ENCODE measurements at regions of chr10 and their contacts with region 1.

Region 1: GRCh38 chr10:63268798-63269503 is 135.8 kb downstream of the NRBF2 start:
- DNase-seq: peak; percentile 52
- ATAC-seq: peak; percentile 89
- H3K4me3 Mint-ChIP-seq: peak overlapping the region; percentile 99
- H3K27ac Mint-ChIP-seq: peak overlapping the region; percentile 98
- H3K4me1 Mint-ChIP-seq: peaks cover 35% of the 10 kb centered on the region
- H3K27me3 Mint-ChIP-seq: no peaks in the 10 kb centered on the region
- CTCF ChIP-seq: no peak

Region 2: DNA sequence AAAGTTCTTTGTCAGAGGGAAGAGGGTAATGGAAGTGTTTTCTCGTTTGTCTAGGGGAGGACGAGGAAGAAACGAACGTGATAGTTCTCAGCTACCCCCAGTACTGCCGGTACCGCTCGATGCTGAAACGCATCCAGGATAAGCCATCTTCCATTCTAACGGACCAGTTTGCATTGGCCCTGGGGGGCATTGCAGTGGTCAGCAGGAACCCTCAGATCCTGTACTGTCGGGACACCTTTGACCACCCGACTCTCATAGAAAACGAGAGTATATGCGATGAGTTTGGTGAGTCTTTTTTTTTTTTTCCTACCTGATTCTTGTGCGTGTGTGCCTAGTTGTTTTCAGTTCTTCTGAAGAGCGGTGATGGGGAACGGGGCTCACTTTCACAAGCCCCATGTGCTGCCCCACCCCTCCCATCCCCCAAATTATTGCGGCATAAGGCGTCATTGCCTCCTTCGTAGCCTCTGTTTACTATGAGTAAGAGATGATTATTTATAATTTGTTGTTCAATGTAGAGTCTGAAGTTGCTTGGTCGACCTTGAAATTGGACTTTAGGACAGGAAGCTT is 1268.8 kb before region 1 on chr10:
- CTCF ChIA-PET with region 1: no interaction called
- POLR2A ChIA-PET with region 1: no interaction called
- intact Hi-C with region 1: loop called (anchors 5 kb)
- DNase-seq: peak; percentile 60
- ATAC-seq: peak; percentile 86
- H3K4me3 Mint-ChIP-seq: peak overlapping the region; percentile 77
- H3K27ac Mint-ChIP-seq: peak overlapping the region; percentile 100
- H3K4me1 Mint-ChIP-seq: peaks cover 95% of the 10 kb centered on the region
- H3K27me3 Mint-ChIP-seq: no peaks in the 10 kb centered on the region
- CTCF ChIP-seq: no peak

Region 3: DNA sequence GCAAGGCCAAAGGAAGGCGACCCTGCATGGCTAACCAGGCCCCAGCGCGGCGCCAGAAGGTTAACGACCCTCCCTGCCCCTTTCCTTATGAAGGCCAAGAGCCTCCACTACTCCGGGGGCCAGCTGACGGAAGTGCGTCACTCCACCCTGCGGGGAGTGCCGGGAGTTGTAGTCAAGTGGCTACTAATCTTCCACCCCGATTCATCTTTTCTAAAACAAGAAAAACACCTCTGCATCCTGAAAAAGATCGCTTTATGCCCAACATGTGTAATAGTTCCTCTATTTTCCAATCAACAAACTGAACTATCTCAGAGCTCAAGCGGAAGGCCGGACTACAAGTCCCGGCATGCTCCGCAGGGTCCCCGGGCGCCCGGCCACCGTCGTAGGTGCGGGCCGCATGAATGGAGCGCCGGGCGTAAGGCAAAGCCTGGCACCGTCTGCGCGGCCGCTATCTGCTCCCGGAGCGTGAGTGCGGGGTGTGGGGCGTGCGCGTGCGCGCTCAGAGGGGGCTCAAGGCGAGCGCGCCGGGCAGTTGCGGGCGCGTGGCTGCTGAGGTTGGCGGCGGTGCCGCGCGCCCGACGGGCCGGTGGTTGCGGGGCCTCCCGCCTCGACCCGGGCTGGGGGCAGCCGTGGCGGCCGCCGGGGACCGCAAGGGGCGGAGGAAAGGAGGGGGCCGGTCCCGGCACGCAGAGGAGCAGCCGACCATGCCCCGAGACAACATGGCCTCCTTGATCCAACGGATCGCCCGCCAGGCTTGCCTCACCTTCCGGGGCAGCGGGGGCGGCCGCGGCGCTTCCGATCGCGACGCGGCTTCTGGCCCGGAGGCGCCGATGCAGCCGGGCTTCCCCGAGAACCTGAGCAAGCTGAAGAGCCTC is 464.4 kb before region 1 on chr10 and contains the start of gene ADO:
- CTCF ChIA-PET with region 1: no interaction called
- POLR2A ChIA-PET with region 1: no interaction called
- intact Hi-C with region 1: loop called (anchors 5 kb)
- DNase-seq: peak; percentile 77
- ATAC-seq: peak; percentile 87
- H3K4me3 Mint-ChIP-seq: peak within 1 kb of the TSS; percentile 95
- H3K27ac Mint-ChIP-seq: peak within 1 kb of the TSS; percentile 99
- H3K4me1 Mint-ChIP-seq: peaks cover 41% of the 10 kb centered on the region
- H3K27me3 Mint-ChIP-seq: no peaks in the 10 kb centered on the region
- CTCF ChIP-seq: no peak
- total RNA-seq, gene ADO: 21.6 and 21.7 TPM in 2 replicates

Region 4: DNA sequence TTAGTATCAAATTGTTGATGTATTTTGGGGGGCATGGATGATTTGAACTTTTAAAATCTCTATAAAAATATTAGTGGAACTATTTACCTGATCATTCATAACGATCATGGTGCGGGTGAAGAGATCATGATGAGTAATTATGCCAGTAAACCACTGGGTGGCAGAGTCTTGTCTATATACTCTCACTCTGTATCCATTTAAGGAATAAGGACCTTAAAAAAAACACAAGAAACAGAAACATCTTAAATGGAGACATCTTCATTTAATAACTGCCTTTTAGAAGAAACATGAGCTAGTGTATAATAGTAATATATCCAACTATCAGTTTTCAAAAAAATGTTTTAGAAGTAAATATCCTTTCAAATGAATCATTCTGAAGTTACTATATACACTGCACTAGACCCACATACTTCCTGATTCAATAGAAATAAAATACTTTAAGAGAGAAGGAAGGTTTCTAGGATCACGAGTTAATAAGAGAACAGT is 51.8 kb before region 1 on chr10:
- CTCF ChIA-PET with region 1: interaction called, 7 read pairs
- POLR2A ChIA-PET with region 1: interaction called, 20 read pairs
- intact Hi-C with region 1: loop called (anchors 1 kb)
- DNase-seq: no peak
- ATAC-seq: peak; percentile 89
- H3K4me3 Mint-ChIP-seq: no peak overlapping the region
- H3K27ac Mint-ChIP-seq: peak overlapping the region; percentile 41
- H3K4me1 Mint-ChIP-seq: peaks cover 60% of the 10 kb centered on the region
- H3K27me3 Mint-ChIP-seq: no peaks in the 10 kb centered on the region
- CTCF ChIP-seq: no peak

Region 5: GRCh38 chr10:63241841-63242281 is 27.1 kb before region 1 on chr10:
- CTCF ChIA-PET with region 1: interaction called, 6 read pairs
- POLR2A ChIA-PET with region 1: interaction called, 28 read pairs
- intact Hi-C with region 1: no loop called
- DNase-seq: no peak
- ATAC-seq: peak; percentile 23
- H3K4me3 Mint-ChIP-seq: peak overlapping the region; percentile 29
- H3K27ac Mint-ChIP-seq: peak overlapping the region; percentile 74
- H3K4me1 Mint-ChIP-seq: peaks cover 87% of the 10 kb centered on the region
- H3K27me3 Mint-ChIP-seq: no peaks in the 10 kb centered on the region
- CTCF ChIP-seq: no peak

Region 6: GRCh38 chr10:63337455-63338251 is 68.7 kb after region 1 on chr10:
- CTCF ChIA-PET with region 1: no interaction called
- POLR2A ChIA-PET with region 1: no interaction called
- intact Hi-C with region 1: no loop called
- DNase-seq: no peak
- ATAC-seq: no peak
- H3K4me3 Mint-ChIP-seq: no peak overlapping the region
- H3K27ac Mint-ChIP-seq: no peak overlapping the region
- H3K4me1 Mint-ChIP-seq: no peaks in the 10 kb centered on the region
- H3K27me3 Mint-ChIP-seq: no peaks in the 10 kb centered on the region
- CTCF ChIP-seq: no peak

Region 7: GRCh38 chr10:63421591-63421990 is 152.6 kb after region 1 on chr10:
- CTCF ChIA-PET with region 1: no interaction called
- POLR2A ChIA-PET with region 1: interaction called, 6 read pairs
- intact Hi-C with region 1: loop called (anchors 1 kb)
- DNase-seq: no peak
- ATAC-seq: peak; percentile 98
- H3K4me3 Mint-ChIP-seq: peak overlapping the region; percentile 30
- H3K27ac Mint-ChIP-seq: peak overlapping the region; percentile 87
- H3K4me1 Mint-ChIP-seq: peaks cover 29% of the 10 kb centered on the region
- H3K27me3 Mint-ChIP-seq: no peaks in the 10 kb centered on the region
- CTCF ChIP-seq: no peak

Region 8: DNA sequence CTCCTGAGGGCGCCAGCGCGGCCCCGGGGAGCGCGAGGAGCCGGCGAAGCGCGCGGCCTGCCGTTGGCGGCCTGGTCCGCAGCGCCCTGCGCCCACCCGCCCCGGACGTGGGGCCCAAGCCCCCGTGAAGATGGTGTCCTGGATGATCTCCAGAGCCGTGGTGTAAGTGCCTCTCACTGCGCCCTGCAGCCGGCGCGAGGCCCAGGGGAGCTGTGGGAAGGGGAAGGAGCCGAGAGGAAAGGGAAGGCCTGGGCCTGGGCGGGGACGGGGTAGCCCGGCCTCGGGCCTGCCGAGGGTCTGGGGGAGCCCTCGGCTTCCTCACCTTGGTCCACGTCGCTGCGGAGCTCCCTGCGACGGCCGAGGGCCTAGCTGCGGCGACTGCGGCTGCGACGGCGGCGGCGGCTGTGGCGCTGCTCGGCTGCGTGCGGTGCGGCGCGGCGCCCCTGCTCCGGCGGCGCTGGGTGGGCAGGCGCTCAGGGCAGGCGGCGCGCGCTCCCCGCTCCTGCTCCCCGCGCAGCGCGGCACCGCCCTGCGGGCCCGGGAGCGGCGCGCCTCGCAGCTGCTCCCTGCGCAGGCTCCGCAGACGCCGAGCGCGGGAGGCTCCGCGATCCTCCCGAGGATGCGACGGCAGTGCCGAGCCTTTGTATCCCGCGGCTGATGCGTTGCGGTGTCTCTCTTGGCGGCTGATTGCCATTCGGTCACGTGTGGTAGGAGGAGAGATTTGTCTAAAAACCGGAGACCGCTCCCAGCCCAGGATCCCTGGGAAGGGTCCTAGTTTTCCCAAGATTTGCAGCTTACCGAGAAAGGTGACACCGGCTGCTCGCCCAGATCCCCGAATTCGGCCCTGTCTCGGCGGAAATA is 252.7 kb after region 1 on chr10:
- CTCF ChIA-PET with region 1: no interaction called
- POLR2A ChIA-PET with region 1: interaction called, 13 read pairs
- intact Hi-C with region 1: loop called (anchors 2 kb)
- DNase-seq: peak; percentile 72
- ATAC-seq: peak; percentile 70
- H3K4me3 Mint-ChIP-seq: peak overlapping the region; percentile 86
- H3K27ac Mint-ChIP-seq: peak overlapping the region; percentile 72
- H3K4me1 Mint-ChIP-seq: peaks cover 47% of the 10 kb centered on the region
- H3K27me3 Mint-ChIP-seq: no peaks in the 10 kb centered on the region
- CTCF ChIP-seq: no peak

Measured in activated B cell treated with CpG ODN at 0.5 μM for 24 hours (primary cell).